ENCODE measurements at regions of chr19 and their contacts with region 1.

Region 1: GRCh38 chr19:41965106-41965505 is 6.0 kb upstream of the RABAC1 start:
- DNase-seq: no peak
- H3K4me3 ChIP-seq: no peak overlapping the region
- H3K27ac ChIP-seq: no peak overlapping the region
- H3K4me1 ChIP-seq: no peaks in the 10 kb centered on the region
- H3K27me3 ChIP-seq: peaks cover 41% of the 10 kb centered on the region
- CTCF ChIP-seq: no peak

Region 2: GRCh38 chr19:41919948-41920712 is 45.0 kb before region 1 on chr19:
- CTCF ChIA-PET with region 1: no interaction called
- POLR2A ChIA-PET with region 1: interaction called, 11 read pairs
- intact Hi-C with region 1: no loop called
- DNase-seq: no peak
- H3K4me3 ChIP-seq: no peak overlapping the region
- H3K27ac ChIP-seq: no peak overlapping the region
- H3K4me1 ChIP-seq: no peaks in the 10 kb centered on the region
- H3K27me3 ChIP-seq: peaks cover 49% of the 10 kb centered on the region
- CTCF ChIP-seq: no peak